CD4-positive, alpha-beta memory T cell (primary cell): ENCODE measurements at regions of chr14 and their contacts with region 1.

Region 1: GRCh38 chr14:61456720-61457119 is 135.3 kb downstream of the PRKCH start:
- DNase-seq: peak; percentile 74 to 83 (median 77)
- H3K4me3 ChIP-seq: no peak overlapping the region
- H3K4me3 Mint-ChIP-seq: peak overlapping the region in 2 of 8 donors; percentile 17 to 27
- H3K27ac ChIP-seq: peak overlapping the region; percentile 13
- H3K27ac Mint-ChIP-seq: peak overlapping the region; percentile 75 to 97 (median 92)
- H3K4me1 ChIP-seq: peaks cover 70% of the 10 kb centered on the region
- H3K4me1 Mint-ChIP-seq: peaks cover 63 to 91% (median 71%) of the 10 kb centered on the region in 4 donors
- H3K27me3 ChIP-seq: no peaks in the 10 kb centered on the region
- H3K27me3 Mint-ChIP-seq: no peaks in the 10 kb centered on the region

Region 2: DNA sequence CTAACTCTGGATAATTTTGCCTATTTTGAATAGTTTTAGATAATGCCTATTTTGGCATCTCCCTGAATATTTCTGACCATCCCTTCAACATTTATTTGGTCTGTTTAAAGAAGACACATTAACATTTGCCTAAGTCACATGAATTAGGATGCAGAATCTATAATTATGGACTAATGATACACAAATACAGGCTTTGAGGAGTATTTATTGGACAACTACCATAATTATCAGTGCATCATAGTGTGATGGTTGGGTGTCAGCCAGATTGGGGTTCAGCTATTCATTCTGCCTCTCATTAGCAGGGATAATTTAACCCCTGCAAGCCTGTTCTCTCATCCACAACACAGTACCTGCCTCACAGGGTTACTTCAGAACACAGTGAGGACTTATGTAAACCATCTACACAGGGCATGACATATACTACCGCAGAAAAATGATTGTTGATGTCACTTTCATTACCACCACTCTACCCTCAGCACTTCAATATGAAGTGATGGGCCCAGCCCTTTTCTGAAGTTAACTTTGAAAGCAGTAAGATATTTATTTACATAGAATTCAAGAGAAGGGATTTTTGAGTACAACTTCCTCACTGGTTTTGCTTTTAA is 120.9 kb before region 1 on chr14:
- CTCF ChIA-PET with region 1: interaction called, 5 read pairs
- POLR2A ChIA-PET with region 1: interaction called, 20 read pairs
- intact Hi-C with region 1: no loop called
- DNase-seq: peak; percentile 65 to 78 (median 73)
- H3K4me3 ChIP-seq: peak overlapping the region; percentile 2 to 25
- H3K4me3 Mint-ChIP-seq: peak overlapping the region; percentile 78 to 87 (median 84)
- H3K27ac ChIP-seq: peak overlapping the region; percentile 84
- H3K27ac Mint-ChIP-seq: peak overlapping the region; percentile 93 to 100 (median 99)
- H3K4me1 ChIP-seq: peaks cover 94% of the 10 kb centered on the region
- H3K4me1 Mint-ChIP-seq: peaks cover 70 to 85% (median 78%) of the 10 kb centered on the region in 4 donors
- H3K27me3 ChIP-seq: no peaks in the 10 kb centered on the region
- H3K27me3 Mint-ChIP-seq: no peaks in the 10 kb centered on the region

Region 3: DNA sequence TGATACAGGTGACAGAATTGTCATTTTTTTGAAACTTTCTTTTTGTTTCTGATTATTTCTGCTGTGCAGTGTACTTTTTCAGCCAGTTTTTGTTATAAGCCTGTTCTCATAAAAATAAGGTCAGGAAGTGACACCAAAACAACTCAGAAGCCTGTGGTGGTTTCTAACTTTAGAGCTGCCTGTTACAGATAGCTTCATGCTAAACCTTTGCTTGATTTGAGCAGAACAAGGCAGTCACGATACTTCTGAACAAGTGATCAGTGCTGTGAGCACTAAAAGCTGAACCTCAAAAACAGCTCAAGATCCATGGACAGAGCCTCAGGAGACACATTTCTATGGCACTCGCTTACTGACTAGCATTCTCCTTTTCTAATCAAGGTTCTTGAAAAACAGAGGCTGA is 53.3 kb before region 1 on chr14:
- CTCF ChIA-PET with region 1: interaction called, 5 read pairs
- POLR2A ChIA-PET with region 1: interaction called, 11 read pairs
- intact Hi-C with region 1: no loop called
- DNase-seq: peak; percentile 49 to 69 (median 59)
- H3K4me3 ChIP-seq: no peak overlapping the region
- H3K4me3 Mint-ChIP-seq: peak overlapping the region; percentile 59 to 88 (median 70)
- H3K27ac ChIP-seq: peak overlapping the region; percentile 52
- H3K27ac Mint-ChIP-seq: peak overlapping the region; percentile 65 to 97 (median 93)
- H3K4me1 ChIP-seq: peaks cover 96% of the 10 kb centered on the region
- H3K4me1 Mint-ChIP-seq: peaks cover 65 to 90% (median 78%) of the 10 kb centered on the region in 4 donors
- H3K27me3 ChIP-seq: no peaks in the 10 kb centered on the region
- H3K27me3 Mint-ChIP-seq: no peaks in the 10 kb centered on the region

Region 4: DNA sequence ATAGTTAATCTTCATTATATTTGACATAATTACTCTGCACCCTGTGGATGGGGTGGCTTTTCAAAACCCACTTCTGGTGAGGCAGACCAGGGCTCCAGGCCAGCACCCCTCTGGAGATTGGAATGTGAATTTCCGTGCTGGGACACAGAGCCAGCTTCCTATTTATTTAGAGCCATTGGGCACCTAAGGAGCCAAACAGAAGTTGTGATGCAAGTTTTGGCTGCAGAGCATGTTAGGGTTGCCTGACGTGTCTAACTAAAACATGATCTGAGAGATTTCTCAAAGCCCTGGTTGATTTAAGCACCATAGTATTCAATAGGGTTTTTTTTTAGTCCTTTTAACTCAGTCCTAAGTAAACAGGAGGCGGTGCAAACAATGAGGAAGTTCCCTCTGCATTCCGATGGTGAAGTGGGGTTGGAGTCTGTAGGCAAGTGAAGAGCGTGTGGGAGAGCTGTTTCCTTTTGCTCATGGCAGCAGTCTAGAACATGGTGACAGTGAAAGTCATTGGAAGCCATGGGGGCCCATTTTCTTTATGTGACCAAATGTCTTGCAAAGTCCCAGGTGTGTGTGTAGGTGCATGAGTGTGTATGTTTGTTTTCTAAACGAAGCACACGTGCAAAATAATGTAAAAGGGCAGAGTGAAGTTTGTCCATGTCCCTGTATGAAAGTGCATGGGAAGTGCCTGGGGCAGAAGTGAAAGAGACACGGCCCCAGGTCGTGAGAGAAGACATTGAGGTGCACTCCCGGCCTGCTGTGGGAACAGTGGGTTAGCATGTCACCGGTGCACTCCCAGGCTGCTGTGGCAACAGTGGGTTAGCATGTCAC is 17.6 kb before region 1 on chr14:
- CTCF ChIA-PET with region 1: interaction called, 3 read pairs
- POLR2A ChIA-PET with region 1: interaction called, 26 read pairs
- intact Hi-C with region 1: loop called (anchors 1 kb)
- DNase-seq: peak; percentile 36 to 74 (median 42)
- H3K4me3 ChIP-seq: peak overlapping the region in 1 of 2 donors; percentile 26
- H3K4me3 Mint-ChIP-seq: peak overlapping the region; percentile 78 to 87 (median 82)
- H3K27ac ChIP-seq: peak overlapping the region; percentile 20
- H3K27ac Mint-ChIP-seq: peak overlapping the region; percentile 89 to 98 (median 96)
- H3K4me1 ChIP-seq: peaks cover 98% of the 10 kb centered on the region
- H3K4me1 Mint-ChIP-seq: peaks cover 74 to 97% (median 85%) of the 10 kb centered on the region in 4 donors
- H3K27me3 ChIP-seq: no peaks in the 10 kb centered on the region
- H3K27me3 Mint-ChIP-seq: no peaks in the 10 kb centered on the region

Region 5: DNA sequence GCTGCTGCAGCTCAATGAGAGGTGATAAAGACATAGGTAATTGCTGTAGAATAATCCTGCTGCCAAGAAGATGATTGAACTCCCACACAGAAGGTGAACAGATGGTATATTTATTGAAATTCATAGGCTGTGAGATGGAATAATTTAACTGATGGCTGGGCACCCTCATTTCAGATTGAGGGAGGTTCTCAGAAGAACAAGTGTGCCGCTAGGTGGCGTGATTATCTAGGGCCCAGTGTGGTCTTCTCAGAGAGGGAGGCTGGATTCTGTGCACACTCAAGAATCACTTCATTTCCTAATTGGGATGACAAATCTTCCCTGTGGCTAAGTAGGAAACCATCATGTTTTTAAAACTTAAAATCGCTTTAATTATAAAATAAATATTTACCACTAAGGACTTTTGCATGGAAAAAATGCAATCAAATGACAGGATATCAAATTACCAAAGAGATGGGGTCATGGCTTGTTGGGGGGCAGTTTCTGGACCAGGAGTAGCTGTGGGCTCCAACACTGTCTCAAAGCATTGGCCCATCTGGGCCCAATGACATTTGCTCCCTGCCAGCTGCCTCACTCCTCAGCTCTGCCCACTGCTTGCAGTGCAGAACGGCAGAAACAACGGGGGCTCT is 437.8 kb after region 1 on chr14:
- CTCF ChIA-PET with region 1: no interaction called
- POLR2A ChIA-PET with region 1: no interaction called
- intact Hi-C with region 1: no loop called
- DNase-seq: peak in 4 of 5 donors; percentile 4 to 31 (median 16)
- H3K4me3 ChIP-seq: no peak overlapping the region
- H3K4me3 Mint-ChIP-seq: no peak overlapping the region
- H3K27ac ChIP-seq: no peak overlapping the region
- H3K27ac Mint-ChIP-seq: no peak overlapping the region
- H3K4me1 ChIP-seq: peaks cover 12% of the 10 kb centered on the region
- H3K4me1 Mint-ChIP-seq: peaks cover 8 to 15% (median 11%) of the 10 kb centered on the region in 4 donors
- H3K27me3 ChIP-seq: no peaks in the 10 kb centered on the region
- H3K27me3 Mint-ChIP-seq: peaks cover 2 to 3% of the 10 kb centered on the region in 2 donors